Posterior vena cava (tissue), 2 donors: ENCODE measurements at regions of chr15 and their contacts with region 1.

Region 1: DNA sequence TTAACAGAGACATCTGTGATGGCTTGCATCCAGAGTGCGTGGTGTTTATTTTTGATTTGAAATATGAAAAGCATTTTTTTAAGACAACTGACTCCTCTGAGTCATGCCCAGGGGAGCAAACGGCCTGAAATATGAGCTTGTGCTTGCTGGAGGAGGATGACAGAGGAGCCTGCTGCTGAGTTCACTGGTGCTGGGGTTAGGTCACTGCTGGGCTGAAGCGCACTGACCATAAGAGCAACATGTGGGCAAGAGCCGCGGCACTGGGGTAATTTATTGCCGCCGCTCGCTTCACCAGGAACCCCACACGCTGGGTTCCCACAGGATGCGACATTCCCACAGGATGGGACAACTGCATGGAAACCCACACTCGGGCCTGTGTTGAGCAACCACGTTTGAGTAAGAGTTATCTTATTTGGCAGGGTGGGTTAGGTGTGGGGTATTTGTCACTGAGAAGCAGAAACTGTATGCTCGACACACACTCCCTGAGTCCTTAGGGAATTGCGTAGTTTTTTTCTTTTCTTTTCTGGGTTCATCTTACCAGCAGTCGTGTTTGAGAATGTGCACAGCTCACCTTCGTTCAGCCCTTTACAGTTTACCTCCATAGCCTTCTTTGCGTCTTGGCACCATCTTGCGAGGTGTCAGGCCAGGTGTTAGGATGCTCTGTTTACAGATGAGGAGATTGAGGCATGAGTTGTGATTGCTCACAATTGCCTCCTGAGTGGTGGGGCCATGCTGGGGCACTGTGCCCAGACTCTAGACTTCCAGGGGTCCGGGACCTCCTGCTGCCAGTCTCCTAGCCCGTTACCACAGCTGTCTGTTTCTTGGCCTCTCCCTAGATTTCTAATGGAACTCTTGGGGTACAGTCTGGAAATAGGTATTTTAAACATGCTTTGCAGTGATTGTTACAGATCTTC is 60.4 kb downstream of the SMAD3 start:
- DNase-seq: peak; percentile 95

Region 2: DNA sequence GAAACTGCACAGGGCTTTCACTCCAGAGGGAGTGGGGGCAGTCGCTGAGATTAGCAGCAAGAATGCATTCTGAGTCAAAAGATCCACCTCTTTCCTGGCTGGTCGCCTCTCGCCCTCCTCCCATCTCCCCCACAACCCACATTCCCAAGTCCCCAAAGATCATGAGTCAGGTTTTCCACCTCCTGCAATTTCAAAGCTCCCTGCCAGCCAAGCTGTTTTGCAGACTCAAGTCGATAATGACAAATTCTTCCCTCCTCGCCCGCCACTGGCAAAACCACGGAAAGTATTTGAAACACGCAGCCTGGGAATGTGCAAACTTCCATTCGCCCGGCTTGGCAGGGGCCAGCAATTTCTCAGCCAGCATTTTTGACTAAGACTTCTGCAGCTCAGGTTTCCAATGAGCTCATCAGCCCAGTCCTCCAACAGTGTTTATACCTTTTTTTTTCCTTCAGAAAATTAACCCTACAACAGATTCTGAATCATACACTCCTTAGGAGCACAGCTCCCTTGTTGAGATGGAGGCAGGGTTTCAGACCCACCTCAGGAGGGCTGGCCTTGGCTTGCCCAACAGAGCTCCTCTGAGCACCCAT is 242.4 kb before region 1 on chr15:
- intact Hi-C with region 1: no loop called
- DNase-seq: peak; percentile 97

Region 3: DNA sequence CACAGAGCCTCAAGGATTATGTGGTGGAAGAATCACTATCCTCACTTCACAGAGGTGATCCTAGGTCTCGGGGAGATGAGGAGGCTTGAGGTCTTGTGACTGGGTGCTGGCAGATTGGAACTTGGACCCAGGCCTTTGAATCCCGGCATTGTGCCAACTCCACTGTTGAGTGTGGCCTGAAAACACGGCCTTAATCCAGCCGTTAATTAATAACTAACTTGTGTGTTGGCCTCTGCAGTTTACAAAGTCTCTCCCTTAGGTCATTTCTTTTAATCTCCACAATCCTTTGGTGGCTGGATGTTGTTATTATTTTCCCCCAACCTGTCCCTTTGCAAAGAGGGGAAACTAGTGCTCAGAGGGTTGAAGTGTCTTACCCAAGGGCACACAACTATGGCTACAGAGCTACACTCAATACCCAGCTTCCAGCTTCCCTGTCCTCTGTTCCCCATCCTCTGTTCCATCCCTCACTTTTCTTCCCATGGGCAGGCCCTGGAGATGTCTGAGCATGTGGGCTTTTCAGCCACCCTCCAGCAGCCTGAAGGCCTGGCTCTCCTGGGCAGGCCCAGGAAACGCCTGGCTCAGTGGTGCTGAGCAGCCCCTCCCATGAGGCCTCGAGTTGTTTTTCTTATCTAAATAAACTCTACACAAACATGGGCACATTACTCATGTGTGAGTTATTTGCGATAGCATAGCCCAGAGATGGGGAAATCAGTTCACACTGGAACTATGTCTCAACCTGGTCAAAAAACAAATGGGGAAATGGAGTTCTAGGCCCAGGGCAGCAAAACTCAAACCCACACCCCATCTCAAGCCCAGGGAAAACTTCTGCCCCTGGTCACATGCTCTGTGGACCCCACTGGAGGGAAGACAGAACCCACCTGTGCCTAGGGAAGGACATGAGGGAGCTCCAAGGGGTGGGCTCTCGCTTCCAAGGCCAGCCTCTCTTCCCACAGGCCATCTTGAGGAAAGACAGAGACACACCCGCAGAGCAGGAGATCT is 77.3 kb before region 1 on chr15:
- intact Hi-C with region 1: loop called in 1 of 2 experiments (anchors 5 kb)
- DNase-seq: no peak

Region 4: GRCh38 chr15:67216896-67217295 is 91.0 kb after region 1 on chr15:
- intact Hi-C with region 1: no loop called
- DNase-seq: no peak

Region 5: GRCh38 chr15:67280217-67280616 is 154.4 kb after region 1 on chr15:
- intact Hi-C with region 1: no loop called
- DNase-seq: no peak